ENCODE measurements at regions of chr10 and their contacts with region 1.

Region 1: GRCh38 chr10:3948843-3949242 is 163.8 kb upstream of the KLF6 start:
- DNase-seq: peak; percentile 83 to 93 (median 88)
- H3K4me3 ChIP-seq: no peak overlapping the region
- H3K4me3 Mint-ChIP-seq: peak overlapping the region; percentile 64 to 85 (median 83)
- H3K27ac ChIP-seq: peak overlapping the region; percentile 52
- H3K27ac Mint-ChIP-seq: peak overlapping the region; percentile 93 to 98 (median 97)
- H3K4me1 ChIP-seq: peaks cover 67% of the 10 kb centered on the region
- H3K4me1 Mint-ChIP-seq: peaks cover 43 to 80% (median 59%) of the 10 kb centered on the region in 4 donors
- H3K27me3 ChIP-seq: no peaks in the 10 kb centered on the region
- H3K27me3 Mint-ChIP-seq: no peaks in the 10 kb centered on the region

Region 2: DNA sequence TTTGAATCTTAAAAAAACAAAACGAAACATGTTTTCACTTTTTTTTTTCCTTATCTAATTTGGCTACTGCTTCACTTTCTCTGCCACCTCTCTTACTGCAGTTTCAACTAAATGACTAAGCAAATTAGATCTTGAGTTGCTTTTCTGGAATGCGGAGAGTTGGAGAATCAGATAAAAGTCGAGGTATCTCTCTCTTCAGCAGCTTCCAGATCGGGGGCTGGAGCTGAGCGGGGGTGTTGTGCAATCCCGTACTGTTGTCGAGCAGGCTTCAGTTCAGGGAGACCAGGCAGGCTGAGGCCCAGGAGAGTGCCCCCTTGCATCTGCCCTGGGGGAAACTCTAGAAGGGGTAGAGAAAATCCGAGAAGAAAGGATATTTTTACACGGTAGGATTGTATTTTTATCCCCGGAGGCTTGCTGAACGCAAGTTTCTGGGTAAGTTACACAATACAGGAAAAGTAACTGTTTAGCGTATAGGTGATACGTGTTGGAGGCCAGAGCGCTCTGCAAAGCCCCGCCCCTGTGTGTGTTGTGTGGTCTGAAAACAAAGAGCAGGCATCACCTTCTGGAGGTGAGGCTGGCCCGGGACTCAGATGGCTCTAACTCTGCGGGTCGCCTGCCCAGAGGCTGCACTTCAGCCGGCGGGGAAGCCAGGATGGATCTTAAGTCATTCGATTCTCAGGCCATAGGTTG is 280.4 kb before region 1 on chr10:
- CTCF ChIA-PET with region 1: no interaction called
- POLR2A ChIA-PET with region 1: no interaction called
- intact Hi-C with region 1: loop called (anchors 10 kb)
- DNase-seq: peak; percentile 83 to 89 (median 85)
- H3K4me3 ChIP-seq: peak overlapping the region; percentile 65 to 92
- H3K4me3 Mint-ChIP-seq: peak overlapping the region; percentile 86 to 96 (median 92)
- H3K27ac ChIP-seq: peak overlapping the region; percentile 67
- H3K27ac Mint-ChIP-seq: peak overlapping the region; percentile 96 to 98 (median 97)
- H3K4me1 ChIP-seq: peaks cover 44% of the 10 kb centered on the region
- H3K4me1 Mint-ChIP-seq: peaks cover 32 to 58% (median 43%) of the 10 kb centered on the region in 4 donors
- H3K27me3 ChIP-seq: no peaks in the 10 kb centered on the region
- H3K27me3 Mint-ChIP-seq: no peaks in the 10 kb centered on the region

Region 3: GRCh38 chr10:3805791-3806461 is 142.9 kb before region 1 on chr10:
- CTCF ChIA-PET with region 1: no interaction called
- POLR2A ChIA-PET with region 1: interaction called, 37 read pairs
- intact Hi-C with region 1: loop called (anchors 1 kb)
- DNase-seq: peak; percentile 42 to 84 (median 55)
- H3K4me3 ChIP-seq: peak overlapping the region; percentile 2 to 41
- H3K4me3 Mint-ChIP-seq: peak overlapping the region in 7 of 8 donors; percentile 38 to 85 (median 76)
- H3K27ac ChIP-seq: peak overlapping the region; percentile 99
- H3K27ac Mint-ChIP-seq: no peak overlapping the region
- H3K4me1 ChIP-seq: peaks cover 98% of the 10 kb centered on the region
- H3K4me1 Mint-ChIP-seq: peaks cover 4 to 75% (median 69%) of the 10 kb centered on the region in 4 donors
- H3K27me3 ChIP-seq: no peaks in the 10 kb centered on the region
- H3K27me3 Mint-ChIP-seq: no peaks in the 10 kb centered on the region

Region 4: DNA sequence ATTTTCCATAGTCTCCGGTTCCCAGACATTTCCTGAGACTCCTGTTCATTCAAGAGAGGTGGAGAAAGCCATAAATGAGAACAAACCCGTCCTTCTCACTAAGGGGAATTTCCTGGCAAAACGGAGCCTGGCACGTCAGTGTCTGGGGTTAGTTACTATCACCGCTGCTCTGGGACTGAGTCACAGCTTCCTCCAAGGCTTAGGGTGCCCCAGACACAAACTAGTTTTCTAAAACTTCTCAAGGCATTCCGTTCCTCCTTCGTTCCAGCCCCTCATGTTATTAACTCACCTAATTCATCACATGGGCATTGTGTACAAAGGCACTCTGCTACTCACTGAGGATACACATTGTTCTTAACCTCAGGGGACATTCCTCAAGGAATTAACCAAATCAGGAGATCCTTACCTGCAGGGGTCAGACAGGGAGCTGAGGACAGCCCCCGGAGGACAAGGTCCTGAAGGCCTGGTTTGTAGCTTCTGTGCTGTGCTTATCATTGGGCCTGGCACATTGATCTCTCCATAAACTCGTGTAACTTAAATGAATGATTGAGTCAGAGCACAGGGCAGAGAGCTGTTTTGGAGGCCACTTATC is 60.9 kb before region 1 on chr10:
- CTCF ChIA-PET with region 1: no interaction called
- POLR2A ChIA-PET with region 1: interaction called, 29 read pairs
- intact Hi-C with region 1: loop called (anchors 5 kb)
- DNase-seq: peak; percentile 70 to 94 (median 74)
- H3K4me3 ChIP-seq: no peak overlapping the region
- H3K4me3 Mint-ChIP-seq: peak overlapping the region; percentile 62 to 82 (median 70)
- H3K27ac ChIP-seq: peak overlapping the region; percentile 77
- H3K27ac Mint-ChIP-seq: peak overlapping the region; percentile 91 to 99 (median 98)
- H3K4me1 ChIP-seq: peaks cover 53% of the 10 kb centered on the region
- H3K4me1 Mint-ChIP-seq: peaks cover 23 to 68% (median 49%) of the 10 kb centered on the region in 4 donors
- H3K27me3 ChIP-seq: no peaks in the 10 kb centered on the region
- H3K27me3 Mint-ChIP-seq: no peaks in the 10 kb centered on the region

Region 5: GRCh38 chr10:3961082-3961481 is 12.2 kb after region 1 on chr10:
- CTCF ChIA-PET with region 1: interaction called, 12 read pairs
- POLR2A ChIA-PET with region 1: interaction called, 48 read pairs
- intact Hi-C with region 1: loop called (anchors 1 kb)
- DNase-seq: peak; percentile 57 to 79 (median 71)
- H3K4me3 ChIP-seq: no peak overlapping the region
- H3K4me3 Mint-ChIP-seq: peak overlapping the region; percentile 12 to 82 (median 58)
- H3K27ac ChIP-seq: peak overlapping the region; percentile 19
- H3K27ac Mint-ChIP-seq: peak overlapping the region; percentile 81 to 90 (median 88)
- H3K4me1 ChIP-seq: peaks cover 26% of the 10 kb centered on the region
- H3K4me1 Mint-ChIP-seq: peaks cover 26 to 51% (median 28%) of the 10 kb centered on the region in 4 donors
- H3K27me3 ChIP-seq: no peaks in the 10 kb centered on the region
- H3K27me3 Mint-ChIP-seq: no peaks in the 10 kb centered on the region

Region 6: DNA sequence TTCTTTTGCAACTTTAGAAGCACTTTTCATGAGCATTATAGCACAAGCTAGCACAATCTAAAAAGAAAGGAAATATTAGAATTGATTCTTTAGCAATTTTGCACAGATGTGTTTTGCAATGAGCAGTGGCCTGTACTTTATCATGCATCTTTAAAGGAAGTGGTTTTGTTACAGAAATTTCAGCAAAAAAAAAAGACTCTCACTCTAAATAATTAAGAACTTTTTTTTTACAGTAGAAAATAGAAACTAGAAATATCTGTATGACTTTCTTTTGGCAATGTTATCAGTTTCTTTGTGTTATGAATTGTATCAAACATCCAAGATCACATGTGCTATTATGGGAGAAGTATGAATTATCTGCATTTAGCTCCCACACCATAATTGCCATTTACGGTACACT is 31.8 kb after region 1 on chr10:
- CTCF ChIA-PET with region 1: interaction called, 3 read pairs
- POLR2A ChIA-PET with region 1: interaction called, 111 read pairs
- intact Hi-C with region 1: no loop called
- DNase-seq: peak in 4 of 5 donors; percentile 29 to 52 (median 31)
- H3K4me3 ChIP-seq: no peak overlapping the region
- H3K4me3 Mint-ChIP-seq: peak overlapping the region; percentile 10 to 81 (median 68)
- H3K27ac ChIP-seq: peak overlapping the region; percentile 0
- H3K27ac Mint-ChIP-seq: peak overlapping the region in 6 of 7 donors; percentile 54 to 92 (median 77)
- H3K4me1 ChIP-seq: peaks cover 74% of the 10 kb centered on the region
- H3K4me1 Mint-ChIP-seq: peaks cover 0 to 42% (median 14%) of the 10 kb centered on the region in 4 donors
- H3K27me3 ChIP-seq: no peaks in the 10 kb centered on the region
- H3K27me3 Mint-ChIP-seq: no peaks in the 10 kb centered on the region